Activated CD4-positive, alpha-beta T cell treated with anti-CD3 and anti-CD28 coated beads for 36 hours (primary cell): ENCODE measurements at regions of chr14 and their contacts with region 1.

Region 1: GRCh38 chr14:51846631-51847488 is 13.6 kb upstream of the GNG2 start:
- DNase-seq: peak; percentile 91
- ATAC-seq: peak; percentile 76
- H3K4me3 Mint-ChIP-seq: peak overlapping the region; percentile 80
- H3K27ac Mint-ChIP-seq: peak overlapping the region; percentile 99
- H3K4me1 Mint-ChIP-seq: peaks cover 78% of the 10 kb centered on the region
- H3K27me3 Mint-ChIP-seq: no peaks in the 10 kb centered on the region

Region 2: DNA sequence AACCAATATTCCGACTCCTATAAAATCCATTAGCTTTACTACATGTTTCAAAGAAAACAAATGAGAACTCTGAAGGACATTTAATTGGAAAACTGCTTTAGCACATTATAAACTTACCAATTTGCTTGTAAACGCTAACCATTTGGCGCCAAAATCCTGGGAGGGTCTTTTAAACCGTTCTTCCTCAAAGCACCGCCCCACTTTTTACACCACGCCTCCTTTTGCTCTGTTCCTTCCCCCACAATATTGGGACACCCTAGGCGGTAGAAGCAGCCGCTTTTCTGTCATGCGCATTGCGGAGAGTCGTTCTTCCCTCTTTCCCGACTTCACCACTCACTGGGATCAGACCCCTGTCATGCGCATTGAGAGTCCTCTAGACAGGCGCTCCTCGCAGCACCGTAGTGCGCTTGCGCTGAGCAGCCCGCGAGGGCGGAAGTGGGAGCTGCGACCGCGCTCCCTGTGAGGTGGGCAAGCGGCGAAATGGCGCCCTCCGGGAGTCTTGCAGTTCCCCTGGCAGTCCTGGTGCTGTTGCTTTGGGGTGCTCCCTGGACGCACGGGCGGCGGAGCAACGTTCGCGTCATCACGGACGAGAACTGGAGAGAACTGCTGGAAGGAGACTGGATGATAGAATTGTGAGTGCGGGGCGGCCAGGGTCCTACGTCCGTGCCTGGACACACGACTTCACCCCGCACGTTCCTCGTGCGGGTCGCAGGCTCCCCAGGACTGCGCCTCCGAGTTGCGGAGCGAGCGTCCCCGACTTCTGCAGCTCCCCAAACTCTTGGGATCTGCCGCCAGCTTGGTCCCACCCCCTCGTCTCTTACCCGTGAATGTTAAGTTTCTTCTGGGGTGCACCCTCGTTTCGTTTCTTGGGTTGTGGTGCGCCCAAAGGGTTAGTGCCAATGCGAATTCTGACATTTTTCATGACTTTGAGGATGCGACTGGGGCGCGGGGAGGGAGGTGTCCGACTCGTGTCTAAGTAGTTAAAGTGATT is 606.8 kb before region 1 on chr14 and contains the start of gene TMX1:
- CTCF ChIA-PET with region 1: no interaction called
- POLR2A ChIA-PET with region 1: no interaction called
- intact Hi-C with region 1: loop called in 1 of 2 experiments (anchors 5 kb)
- DNase-seq: peak; percentile 94
- ATAC-seq: peak; percentile 93
- H3K4me3 Mint-ChIP-seq: no peak within 1 kb of the TSS
- H3K27ac Mint-ChIP-seq: no peak within 1 kb of the TSS
- H3K4me1 Mint-ChIP-seq: peaks cover 15% of the 10 kb centered on the region
- H3K27me3 Mint-ChIP-seq: no peaks in the 10 kb centered on the region
- total RNA-seq, gene TMX1: 38.8 to 55.9 TPM

Region 3: GRCh38 chr14:51780006-51780692 is 66.7 kb before region 1 on chr14:
- CTCF ChIA-PET with region 1: interaction called, 3 read pairs
- POLR2A ChIA-PET with region 1: no interaction called
- intact Hi-C with region 1: loop called in 1 of 2 experiments (anchors 5 kb)
- DNase-seq: peak; percentile 83
- ATAC-seq: peak; percentile 56
- H3K4me3 Mint-ChIP-seq: no peak overlapping the region
- H3K27ac Mint-ChIP-seq: no peak overlapping the region
- H3K4me1 Mint-ChIP-seq: peaks cover 26% of the 10 kb centered on the region
- H3K27me3 Mint-ChIP-seq: peaks cover 4% of the 10 kb centered on the region

Region 4: GRCh38 chr14:51865953-51866747 is 19.3 kb after region 1 on chr14:
- CTCF ChIA-PET with region 1: interaction called, 37 read pairs
- POLR2A ChIA-PET with region 1: interaction called, 23 read pairs
- intact Hi-C with region 1: loop called in 1 of 2 experiments (anchors 1 kb)
- DNase-seq: no peak
- ATAC-seq: peak; percentile 51
- H3K4me3 Mint-ChIP-seq: no peak overlapping the region
- H3K27ac Mint-ChIP-seq: no peak overlapping the region
- H3K4me1 Mint-ChIP-seq: peaks cover 20% of the 10 kb centered on the region
- H3K27me3 Mint-ChIP-seq: no peaks in the 10 kb centered on the region

Region 5: GRCh38 chr14:51929906-51930682 is 83.2 kb after region 1 on chr14:
- CTCF ChIA-PET with region 1: no interaction called
- POLR2A ChIA-PET with region 1: no interaction called
- intact Hi-C with region 1: loop called in 1 of 2 experiments (anchors 1 kb)
- DNase-seq: no peak
- ATAC-seq: peak; percentile 40
- H3K4me3 Mint-ChIP-seq: no peak overlapping the region
- H3K27ac Mint-ChIP-seq: peak overlapping the region; percentile 91
- H3K4me1 Mint-ChIP-seq: peaks cover 66% of the 10 kb centered on the region
- H3K27me3 Mint-ChIP-seq: no peaks in the 10 kb centered on the region

Region 6: GRCh38 chr14:52325126-52325525 is 478.3 kb after region 1 on chr14:
- CTCF ChIA-PET with region 1: no interaction called
- POLR2A ChIA-PET with region 1: no interaction called
- intact Hi-C with region 1: loop called in 1 of 2 experiments (anchors 5 kb)
- DNase-seq: peak; percentile 45
- ATAC-seq: peak; percentile 87
- H3K4me3 Mint-ChIP-seq: no peak overlapping the region
- H3K27ac Mint-ChIP-seq: no peak overlapping the region
- H3K4me1 Mint-ChIP-seq: peaks cover 43% of the 10 kb centered on the region
- H3K27me3 Mint-ChIP-seq: peaks cover 8% of the 10 kb centered on the region